Astrocyte of the cerebellum (primary cell): ENCODE measurements at regions of chr18 and their contacts with region 1.

Region 1: DNA sequence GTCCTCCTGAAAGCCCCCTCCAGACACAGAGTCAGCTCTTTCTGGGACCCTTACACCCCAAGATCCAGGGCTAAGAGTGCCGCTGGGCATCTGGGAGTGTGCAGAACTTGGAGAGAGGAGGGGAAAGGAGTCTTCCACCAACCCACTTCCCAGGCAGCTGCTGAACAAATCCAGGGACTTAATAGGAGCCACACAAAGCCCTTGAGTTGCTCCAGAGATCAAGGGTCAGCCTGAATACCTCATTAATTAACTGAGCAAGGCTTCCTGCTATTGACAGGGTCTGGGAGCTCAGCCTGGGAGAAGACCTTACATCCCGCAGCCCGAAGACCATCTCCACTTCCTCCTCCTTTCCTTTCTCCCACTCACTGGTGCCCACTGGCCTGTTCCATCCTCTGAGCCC is 108.3 kb downstream of the CELF4 start:
- DNase-seq: no peak
- H3K4me3 ChIP-seq: no peak overlapping the region
- CTCF ChIP-seq: no peak

Region 2: GRCh38 chr18:37378336-37379010 is 78.9 kb before region 1 on chr18:
- in situ Hi-C with region 1: loop called (anchors 5 kb)
- DNase-seq: no peak
- H3K4me3 ChIP-seq: no peak overlapping the region
- CTCF ChIP-seq: no peak

Region 3: GRCh38 chr18:37419272-37419671 is 38.1 kb before region 1 on chr18:
- in situ Hi-C with region 1: no loop called
- DNase-seq: no peak
- H3K4me3 ChIP-seq: no peak overlapping the region
- CTCF ChIP-seq: no peak